Activated T-helper 1 cell treated with anti-CD3 and anti-CD28 coated beads, Interleukin-12 subunit alpha, Interleukin-12 subunit beta, Interleukin-2, Interleukin-4 antibody, amounts not matched to agents 30 ng/mL and 10 ng/mL and 1 ng/mL, durations not matched to agents 14 hours and 24 hours and 36 hours (primary cell): ENCODE measurements at regions of chr1 and their contacts with region 1.

Region 1: DNA sequence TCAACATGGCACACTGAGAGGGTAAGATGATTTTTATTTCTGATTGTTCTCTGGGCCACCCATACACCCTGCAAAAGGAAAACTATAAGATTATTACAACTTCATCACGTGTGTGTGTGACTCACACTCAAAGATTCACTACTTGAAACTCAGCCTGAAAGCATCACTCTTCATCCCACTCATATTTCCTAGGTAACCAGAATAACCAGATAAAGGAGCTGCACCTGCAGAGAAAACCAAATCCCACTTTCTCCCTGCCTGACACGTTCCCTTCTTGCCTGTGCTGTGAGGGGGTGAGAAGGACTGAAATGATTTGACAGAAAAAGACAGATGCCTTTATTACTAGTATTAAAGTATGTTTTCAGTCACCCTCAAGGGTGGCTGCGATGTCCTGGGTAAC is 131.6 kb downstream of the TGFBR3 start:
- DNase-seq: no peak
- H3K4me3 Mint-ChIP-seq: no peak overlapping the region
- H3K27ac Mint-ChIP-seq: peak overlapping the region; percentile 67
- H3K4me1 Mint-ChIP-seq: peaks cover 46% of the 10 kb centered on the region
- H3K27me3 Mint-ChIP-seq: peaks cover 6% of the 10 kb centered on the region

Region 2: DNA sequence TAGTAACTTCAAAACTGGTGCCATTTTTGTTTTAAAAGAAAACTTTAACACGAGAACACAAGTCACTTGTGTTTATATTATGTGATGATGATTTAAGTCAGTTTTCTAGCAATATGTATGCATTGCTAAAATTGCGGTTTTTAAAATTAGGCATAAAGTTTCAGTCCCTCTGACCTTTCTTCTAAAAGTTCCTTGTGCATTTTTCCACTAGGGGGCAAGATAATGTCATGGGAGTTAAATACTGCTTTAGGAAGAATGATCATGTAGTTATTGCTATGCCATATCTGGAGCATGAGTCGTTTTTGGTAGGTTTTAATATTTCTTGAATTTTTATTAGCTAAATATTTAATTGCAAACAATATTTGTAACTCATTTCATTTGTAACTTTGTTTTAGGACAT is 243.0 kb before region 1 on chr1:
- intact Hi-C with region 1: loop called (anchors 2 kb)
- DNase-seq: no peak
- H3K4me3 Mint-ChIP-seq: no peak overlapping the region
- H3K27ac Mint-ChIP-seq: no peak overlapping the region
- H3K4me1 Mint-ChIP-seq: peaks cover 25% of the 10 kb centered on the region
- H3K27me3 Mint-ChIP-seq: no peaks in the 10 kb centered on the region

Region 3: GRCh38 chr1:91601554-91602376 is 152.6 kb before region 1 on chr1:
- intact Hi-C with region 1: loop called (anchors 1 kb)
- DNase-seq: no peak
- H3K4me3 Mint-ChIP-seq: no peak overlapping the region
- H3K27ac Mint-ChIP-seq: peak overlapping the region; percentile 27
- H3K4me1 Mint-ChIP-seq: peaks cover 24% of the 10 kb centered on the region
- H3K27me3 Mint-ChIP-seq: peaks cover 2% of the 10 kb centered on the region

Region 4: DNA sequence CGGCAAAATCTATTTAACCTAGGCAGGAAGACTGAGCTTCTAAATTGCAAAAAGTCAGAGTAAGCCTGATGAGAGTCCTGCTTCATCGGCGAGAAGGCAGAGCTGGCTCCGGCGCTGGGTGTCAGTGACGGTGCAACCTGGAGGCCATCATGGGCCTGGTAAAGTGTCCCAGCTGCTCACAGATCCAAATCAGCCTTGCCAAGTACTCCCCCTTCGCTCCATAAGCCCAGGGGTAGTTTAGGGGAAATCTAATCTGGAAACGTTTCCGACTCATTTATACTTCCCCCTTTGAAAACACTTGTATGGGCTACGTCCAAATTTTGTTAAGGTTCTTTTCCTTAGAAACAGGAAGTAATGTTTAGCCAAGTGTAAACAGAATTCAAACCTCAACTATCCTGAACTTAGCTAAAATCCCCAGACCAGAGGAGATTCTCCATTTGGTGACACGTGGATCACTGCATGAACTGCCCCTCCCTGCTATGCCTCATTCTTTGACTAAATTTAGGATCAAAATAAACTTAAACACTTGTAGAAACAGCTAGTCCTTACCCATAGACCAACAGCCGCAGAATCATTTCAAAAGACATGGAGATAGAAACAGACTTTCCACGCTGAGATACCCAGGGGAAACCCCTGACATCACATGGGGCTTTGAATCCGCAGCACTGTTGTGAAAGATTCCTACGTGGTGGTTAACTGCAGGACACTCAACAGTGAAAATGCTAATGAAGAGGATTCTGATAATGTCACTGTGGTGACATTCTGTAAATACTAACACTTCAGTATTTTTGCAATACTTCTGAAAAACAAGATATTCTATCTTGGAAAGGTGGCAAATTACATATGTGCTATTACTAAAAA is 41.1 kb before region 1 on chr1:
- intact Hi-C with region 1: loop called (anchors 1 kb)
- DNase-seq: peak; percentile 52
- H3K4me3 Mint-ChIP-seq: peak overlapping the region; percentile 61
- H3K27ac Mint-ChIP-seq: peak overlapping the region; percentile 94
- H3K4me1 Mint-ChIP-seq: peaks cover 59% of the 10 kb centered on the region
- H3K27me3 Mint-ChIP-seq: peaks cover 4% of the 10 kb centered on the region

Region 5: DNA sequence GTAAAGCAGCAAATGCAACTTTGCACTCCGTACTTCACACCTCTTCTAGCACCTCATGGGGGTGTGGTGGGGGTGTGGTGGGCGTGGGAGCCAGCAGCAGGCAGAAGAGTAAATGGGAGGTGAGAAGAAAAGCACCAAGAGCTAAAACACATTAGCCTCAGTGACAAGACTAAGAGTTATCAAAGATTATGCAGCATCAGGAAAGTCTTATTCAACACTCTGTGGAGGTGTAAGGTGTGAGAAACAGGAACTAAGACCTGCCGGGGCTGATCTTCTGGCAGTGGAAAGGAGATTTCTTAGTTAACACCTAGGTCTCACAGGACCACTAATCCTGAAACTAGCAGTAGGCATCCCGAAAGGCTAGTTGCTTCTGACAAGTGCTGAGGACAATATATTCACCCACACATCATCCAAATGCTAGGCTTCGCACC is 121.7 kb after region 1 on chr1:
- intact Hi-C with region 1: loop called (anchors 1 kb)
- DNase-seq: no peak
- H3K4me3 Mint-ChIP-seq: peak overlapping the region; percentile 37
- H3K27ac Mint-ChIP-seq: peak overlapping the region; percentile 71
- H3K4me1 Mint-ChIP-seq: peaks cover 72% of the 10 kb centered on the region
- H3K27me3 Mint-ChIP-seq: peaks cover 6% of the 10 kb centered on the region